ENCODE measurements at regions of chr22 and their contacts with region 1.

Region 1: DNA sequence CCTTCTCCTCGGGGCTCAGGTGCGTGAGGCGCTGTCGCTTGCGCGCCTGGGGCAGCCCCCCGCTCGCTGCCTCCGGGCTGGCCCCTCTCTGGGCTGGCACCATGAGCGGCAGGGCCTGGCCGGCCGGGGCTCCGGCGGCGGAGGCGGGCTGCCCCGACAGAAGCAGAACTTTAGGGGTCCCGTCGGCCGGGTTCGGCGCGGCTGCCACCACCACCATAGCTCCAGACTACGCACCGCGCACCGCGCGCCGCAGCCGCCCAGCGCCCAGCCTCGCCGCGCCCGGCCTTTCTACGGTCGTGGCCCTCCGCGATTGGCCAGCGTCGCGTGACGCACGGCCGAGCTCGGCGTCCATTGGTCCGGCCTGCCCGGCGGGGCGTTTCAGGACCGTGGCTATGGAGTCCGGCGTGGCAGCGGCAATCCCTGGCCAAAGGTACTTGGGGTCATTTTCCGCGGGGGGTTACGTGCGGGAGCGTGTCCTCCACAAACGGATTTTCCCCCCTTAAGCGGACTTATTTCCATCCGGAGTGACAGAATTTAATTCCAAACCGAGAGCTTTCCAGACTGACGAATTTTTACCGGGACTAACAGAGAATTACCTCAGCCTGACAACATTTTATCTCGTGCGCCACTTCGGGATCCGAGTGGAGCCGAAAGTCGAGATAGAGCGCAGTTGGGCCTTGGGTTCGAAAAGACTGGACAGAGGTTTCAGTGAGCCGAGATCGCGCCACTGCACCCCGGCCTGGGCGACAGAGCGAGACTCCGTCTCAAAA is at the start of gene XBP1:
- DNase-seq: peak; percentile 98
- H3K4me3 ChIP-seq: peak within 1 kb of the TSS; percentile 79 to 95
- H3K27ac ChIP-seq: peak within 1 kb of the TSS; percentile 87 to 99
- H3K4me1 ChIP-seq: peaks cover 2 to 11% of the 10 kb centered on the region in 2 experiments; a peak in 1 of 4 replicates
- H3K27me3 ChIP-seq: no peaks in the 10 kb centered on the region
- CTCF ChIP-seq: no peak
- EP300 ChIP-seq: no peak
- RAD21 ChIP-seq: no peak
- polyA plus RNA-seq, gene XBP1: 55.6 and 67.6 TPM in 2 replicates

Region 2: DNA sequence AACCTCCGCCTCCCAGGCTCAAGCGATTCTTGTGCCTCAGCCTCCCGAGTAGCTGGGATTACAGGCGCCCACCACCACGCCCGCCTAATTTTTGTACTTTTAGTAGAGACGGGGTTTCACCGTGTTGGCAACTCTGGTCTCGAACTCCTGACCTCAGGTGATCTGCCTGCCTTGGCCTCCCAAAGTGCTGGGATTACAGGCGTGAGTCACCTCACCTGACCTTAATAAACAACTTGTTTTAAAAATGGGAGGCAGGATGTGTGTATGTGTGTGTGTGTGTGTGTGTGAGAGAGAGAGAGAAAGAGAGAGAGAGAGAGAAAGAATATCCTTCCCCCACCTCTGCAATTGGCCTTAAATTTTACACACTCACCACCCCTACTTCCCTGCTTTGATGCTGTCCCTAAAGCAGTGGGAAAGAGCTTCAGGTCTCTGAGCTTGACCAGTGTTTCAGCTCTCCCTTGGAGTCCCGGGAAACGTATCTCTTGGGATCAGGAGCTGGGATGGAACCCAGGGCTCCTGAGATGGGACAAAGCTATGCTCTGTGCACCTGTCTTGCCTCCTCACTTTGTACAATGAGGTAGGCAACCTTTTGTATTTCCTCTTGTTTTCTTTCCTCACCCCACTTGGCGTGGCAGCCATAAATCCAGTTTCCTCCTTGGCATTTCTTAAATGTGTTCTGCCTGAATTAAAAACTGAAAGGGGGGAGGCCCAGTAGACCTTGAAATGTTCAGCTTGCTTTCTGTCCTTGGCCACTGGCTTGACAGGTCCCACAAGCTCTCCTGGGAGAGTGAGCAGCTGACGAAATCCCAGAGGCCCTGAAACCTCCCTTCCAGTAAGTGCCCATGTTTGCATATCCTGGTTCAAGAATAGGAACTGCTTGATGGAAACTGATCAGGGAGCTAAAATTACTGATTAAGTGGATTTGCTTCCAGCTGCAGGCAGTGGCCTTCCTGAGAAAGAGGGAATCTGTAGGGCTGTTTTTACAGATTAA is 17.7 kb after region 1 on chr22:
- CTCF ChIA-PET with region 1: interaction called, 3 read pairs
- POLR2A ChIA-PET with region 1: interaction called, 13 read pairs
- DNase-seq: peak; percentile 34
- H3K4me3 ChIP-seq: no peak overlapping the region
- H3K27ac ChIP-seq: peak overlapping the region in 1 of 2 experiments; percentile 14; a peak in 1 of 4 replicates
- H3K4me1 ChIP-seq: peaks cover 0 to 6% of the 10 kb centered on the region in 2 experiments; a peak in 1 of 4 replicates
- H3K27me3 ChIP-seq: no peaks in the 10 kb centered on the region
- CTCF ChIP-seq: no peak
- EP300 ChIP-seq: no peak
- RAD21 ChIP-seq: no peak

Measured in SK-N-SH (cell line).